IMR-90 (cell line): ENCODE measurements at regions of chr1 and their contacts with region 1.

Region 1: GRCh38 chr1:67500413-67500959 is 70.3 kb upstream of the SERBP1 start:
- DNase-seq: peak; percentile 74
- ATAC-seq: peak; percentile 100
- H3K4me3 ChIP-seq: no peak overlapping the region
- H3K27ac ChIP-seq: no peak overlapping the region
- H3K4me1 ChIP-seq: no peaks in the 10 kb centered on the region
- H3K27me3 ChIP-seq: peaks cover 14% of the 10 kb centered on the region
- CTCF ChIP-seq: peak; percentile 99
- POLR2A ChIP-seq: peak; percentile 46; the same call in 1 of the 2 replicates
- RAD21 ChIP-seq: peak; percentile 100

Region 2: DNA sequence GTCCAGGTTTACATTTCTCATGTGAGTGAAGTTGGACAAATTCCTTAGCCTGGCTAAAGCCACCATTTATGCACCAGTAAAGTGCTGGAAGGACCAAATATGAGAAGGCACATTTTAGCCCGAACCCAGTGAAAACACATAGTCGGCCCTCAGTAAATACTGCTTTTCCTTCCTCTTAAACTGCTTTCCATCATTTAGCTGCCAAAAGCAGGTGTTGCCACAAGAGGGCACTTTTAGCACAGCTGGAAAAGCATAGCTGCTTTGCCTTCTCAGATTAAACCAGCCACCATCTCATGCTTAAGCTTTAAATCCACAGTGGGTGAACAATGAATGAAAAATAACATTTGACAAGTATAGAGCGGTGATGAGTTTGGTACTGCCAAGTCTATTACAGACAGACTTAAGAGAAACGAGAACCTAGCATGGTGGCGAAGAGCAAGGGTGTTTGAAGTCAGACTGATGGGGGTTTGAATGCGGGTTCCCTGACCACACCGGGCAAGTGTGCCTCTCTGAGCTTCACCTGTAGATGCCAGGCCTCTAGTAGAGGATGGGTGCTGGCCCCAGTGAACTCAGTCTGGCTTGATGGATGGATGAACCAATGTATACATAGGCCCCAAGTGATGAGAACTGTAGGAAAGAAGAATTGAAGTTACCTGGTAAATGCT is 504.3 kb before region 1 on chr1:
- CTCF ChIA-PET with region 1: no interaction called
- POLR2A ChIA-PET with region 1: no interaction called
- dilution Hi-C with region 1: no loop called
- in situ Hi-C with region 1: no loop called
- intact Hi-C with region 1: loop called (anchors 5 kb)
- DNase-seq: peak; percentile 77
- ATAC-seq: peak; percentile 84
- H3K4me3 ChIP-seq: no peak overlapping the region
- H3K27ac ChIP-seq: no peak overlapping the region
- H3K4me1 ChIP-seq: no peaks in the 10 kb centered on the region
- H3K27me3 ChIP-seq: no peaks in the 10 kb centered on the region
- CTCF ChIP-seq: peak; percentile 90
- POLR2A ChIP-seq: no peak
- RAD21 ChIP-seq: peak; percentile 97

Region 3: DNA sequence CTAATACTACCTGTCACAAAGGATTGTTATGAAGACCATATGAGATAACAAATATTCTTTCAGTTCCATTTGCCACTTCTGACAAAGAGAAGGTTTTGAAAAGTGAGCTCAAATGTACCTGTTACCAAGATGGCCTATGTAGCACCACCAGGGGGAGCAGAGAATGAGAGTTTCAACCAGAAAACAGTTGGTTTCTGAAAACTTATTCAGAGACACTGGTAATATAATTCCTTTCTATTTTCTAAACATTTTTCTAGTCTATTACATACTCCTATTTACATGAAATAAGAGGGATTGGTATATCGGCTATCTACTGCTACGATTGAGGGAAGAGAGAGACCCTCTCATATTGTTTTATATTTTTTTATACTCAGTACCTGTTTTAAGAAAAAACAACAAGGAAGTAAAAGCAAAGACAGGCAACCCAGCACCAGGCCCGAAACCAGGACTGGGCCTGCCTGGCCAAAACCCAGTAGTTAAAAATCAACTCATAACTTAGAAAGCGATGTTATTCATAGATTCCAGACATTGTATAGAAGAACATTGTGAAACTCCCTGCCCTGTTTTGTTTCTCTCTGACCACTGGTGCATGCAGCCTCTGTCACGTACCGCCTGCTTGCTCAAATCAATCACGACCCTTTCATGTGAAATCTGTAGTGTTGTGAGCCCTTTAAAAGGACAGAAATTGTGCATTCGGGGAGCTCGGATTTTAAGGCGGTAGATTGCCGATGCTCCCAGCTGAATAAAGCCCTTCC is 285.9 kb before region 1 on chr1:
- CTCF ChIA-PET with region 1: interaction called, 22 read pairs
- POLR2A ChIA-PET with region 1: interaction called, 3 read pairs
- dilution Hi-C with region 1: no loop called
- in situ Hi-C with region 1: no loop called
- intact Hi-C with region 1: loop called (anchors 1 kb)
- DNase-seq: peak; percentile 29
- ATAC-seq: peak; percentile 62
- H3K4me3 ChIP-seq: no peak overlapping the region
- H3K27ac ChIP-seq: no peak overlapping the region
- H3K4me1 ChIP-seq: no peaks in the 10 kb centered on the region
- H3K27me3 ChIP-seq: no peaks in the 10 kb centered on the region
- CTCF ChIP-seq: peak; percentile 55
- POLR2A ChIP-seq: no peak
- RAD21 ChIP-seq: peak; percentile 36

Region 4: DNA sequence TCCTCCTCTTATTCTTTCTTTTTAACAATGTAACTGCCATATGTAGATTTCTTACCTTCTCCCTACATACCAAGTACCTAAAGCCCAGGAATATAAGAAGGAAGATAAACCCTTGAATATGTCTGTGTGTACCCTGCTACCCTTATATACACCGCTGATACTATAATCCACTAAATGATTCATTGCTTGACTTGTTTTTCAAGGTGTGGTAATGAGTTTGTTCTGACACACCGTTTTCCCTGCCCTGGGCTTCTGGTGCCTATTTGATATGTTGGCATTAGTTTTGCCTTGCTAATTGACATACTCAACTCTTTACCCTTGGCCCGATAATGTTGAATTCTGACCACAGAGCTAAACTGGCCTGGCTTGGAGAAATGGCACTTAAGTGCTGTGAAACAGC is 269.9 kb before region 1 on chr1:
- CTCF ChIA-PET with region 1: no interaction called
- POLR2A ChIA-PET with region 1: no interaction called
- dilution Hi-C with region 1: no loop called
- in situ Hi-C with region 1: loop called (anchors 10 kb)
- intact Hi-C with region 1: loop called (anchors 1 kb)
- DNase-seq: no peak
- ATAC-seq: no peak
- H3K4me3 ChIP-seq: no peak overlapping the region
- H3K27ac ChIP-seq: no peak overlapping the region
- H3K4me1 ChIP-seq: no peaks in the 10 kb centered on the region
- H3K27me3 ChIP-seq: peaks cover 3% of the 10 kb centered on the region; the same call in 1 of the 2 replicates
- CTCF ChIP-seq: no peak
- POLR2A ChIP-seq: no peak
- RAD21 ChIP-seq: no peak

Region 5: GRCh38 chr1:67347688-67348472 is 152.6 kb before region 1 on chr1:
- CTCF ChIA-PET with region 1: interaction called, 34 read pairs
- POLR2A ChIA-PET with region 1: no interaction called
- dilution Hi-C with region 1: no loop called
- in situ Hi-C with region 1: loop called (anchors 5 kb)
- intact Hi-C with region 1: loop called (anchors 1 kb)
- DNase-seq: peak; percentile 61
- ATAC-seq: peak; percentile 91
- H3K4me3 ChIP-seq: no peak overlapping the region; the same call in 1 of the 2 replicates
- H3K27ac ChIP-seq: no peak overlapping the region
- H3K4me1 ChIP-seq: no peaks in the 10 kb centered on the region
- H3K27me3 ChIP-seq: peaks cover 4% of the 10 kb centered on the region
- CTCF ChIP-seq: peak; percentile 69
- POLR2A ChIP-seq: no peak
- RAD21 ChIP-seq: peak; percentile 70

Region 6: GRCh38 chr1:67430352-67431155 is 69.9 kb before region 1 on chr1 and contains the start of gene SERBP1:
- CTCF ChIA-PET with region 1: no interaction called
- POLR2A ChIA-PET with region 1: no interaction called
- dilution Hi-C with region 1: no loop called
- in situ Hi-C with region 1: no loop called
- intact Hi-C with region 1: loop called (anchors 1 kb)
- DNase-seq: peak; percentile 96
- ATAC-seq: peak; percentile 95
- H3K4me3 ChIP-seq: peak within 1 kb of the TSS; percentile 99
- H3K27ac ChIP-seq: peak within 1 kb of the TSS; percentile 81
- H3K4me1 ChIP-seq: no peaks in the 10 kb centered on the region
- H3K27me3 ChIP-seq: no peaks in the 10 kb centered on the region
- CTCF ChIP-seq: no peak
- POLR2A ChIP-seq: peak; percentile 83
- RAD21 ChIP-seq: no peak
- total RNA-seq, gene SERBP1: 94.1 and 240 TPM in 2 replicates

Region 7: GRCh38 chr1:67446893-67447292 is 53.6 kb before region 1 on chr1:
- CTCF ChIA-PET with region 1: no interaction called
- POLR2A ChIA-PET with region 1: no interaction called
- dilution Hi-C with region 1: no loop called
- in situ Hi-C with region 1: no loop called
- intact Hi-C with region 1: no loop called
- DNase-seq: no peak
- ATAC-seq: no peak
- H3K4me3 ChIP-seq: no peak overlapping the region
- H3K27ac ChIP-seq: no peak overlapping the region
- H3K4me1 ChIP-seq: no peaks in the 10 kb centered on the region
- H3K27me3 ChIP-seq: peaks cover 8% of the 10 kb centered on the region
- CTCF ChIP-seq: no peak
- POLR2A ChIP-seq: no peak
- RAD21 ChIP-seq: no peak

Region 8: DNA sequence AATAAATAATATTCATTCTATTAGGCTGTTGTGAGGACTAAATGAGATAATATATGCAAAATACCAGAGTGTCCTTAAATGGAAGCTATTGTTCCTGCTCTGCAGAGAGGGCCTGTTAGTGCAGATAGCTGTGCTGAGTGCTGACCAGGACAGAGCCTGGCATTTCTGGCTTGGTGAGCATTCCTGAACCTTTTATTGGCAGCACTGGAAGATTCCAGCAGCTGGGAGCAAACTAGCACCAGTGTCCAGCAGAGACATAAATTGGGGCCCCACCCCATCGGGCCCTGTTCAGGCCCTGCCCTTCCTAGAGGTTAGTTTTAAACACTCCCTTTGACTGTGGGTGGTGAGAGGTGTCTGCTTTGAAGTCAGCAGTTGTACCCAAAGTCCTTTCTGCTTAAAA is 98.6 kb after region 1 on chr1:
- CTCF ChIA-PET with region 1: no interaction called
- POLR2A ChIA-PET with region 1: no interaction called
- dilution Hi-C with region 1: no loop called
- in situ Hi-C with region 1: no loop called
- intact Hi-C with region 1: no loop called
- DNase-seq: no peak
- ATAC-seq: peak; percentile 66
- H3K4me3 ChIP-seq: no peak overlapping the region
- H3K27ac ChIP-seq: no peak overlapping the region
- H3K4me1 ChIP-seq: no peaks in the 10 kb centered on the region
- H3K27me3 ChIP-seq: peaks cover 2% of the 10 kb centered on the region; the same call in 1 of the 2 replicates
- CTCF ChIP-seq: no peak
- POLR2A ChIP-seq: no peak
- RAD21 ChIP-seq: no peak

Region 9: GRCh38 chr1:67874501-67875111 is 374.1 kb after region 1 on chr1:
- CTCF ChIA-PET with region 1: no interaction called
- POLR2A ChIA-PET with region 1: no interaction called
- dilution Hi-C with region 1: no loop called
- in situ Hi-C with region 1: no loop called
- intact Hi-C with region 1: no loop called
- DNase-seq: no peak
- ATAC-seq: no peak
- H3K4me3 ChIP-seq: no peak overlapping the region
- H3K27ac ChIP-seq: no peak overlapping the region
- H3K4me1 ChIP-seq: no peaks in the 10 kb centered on the region
- H3K27me3 ChIP-seq: no peaks in the 10 kb centered on the region
- CTCF ChIP-seq: no peak
- POLR2A ChIP-seq: no peak
- RAD21 ChIP-seq: no peak